ENCODE measurements at regions of chr17 and their contacts with region 1.

Region 1: DNA sequence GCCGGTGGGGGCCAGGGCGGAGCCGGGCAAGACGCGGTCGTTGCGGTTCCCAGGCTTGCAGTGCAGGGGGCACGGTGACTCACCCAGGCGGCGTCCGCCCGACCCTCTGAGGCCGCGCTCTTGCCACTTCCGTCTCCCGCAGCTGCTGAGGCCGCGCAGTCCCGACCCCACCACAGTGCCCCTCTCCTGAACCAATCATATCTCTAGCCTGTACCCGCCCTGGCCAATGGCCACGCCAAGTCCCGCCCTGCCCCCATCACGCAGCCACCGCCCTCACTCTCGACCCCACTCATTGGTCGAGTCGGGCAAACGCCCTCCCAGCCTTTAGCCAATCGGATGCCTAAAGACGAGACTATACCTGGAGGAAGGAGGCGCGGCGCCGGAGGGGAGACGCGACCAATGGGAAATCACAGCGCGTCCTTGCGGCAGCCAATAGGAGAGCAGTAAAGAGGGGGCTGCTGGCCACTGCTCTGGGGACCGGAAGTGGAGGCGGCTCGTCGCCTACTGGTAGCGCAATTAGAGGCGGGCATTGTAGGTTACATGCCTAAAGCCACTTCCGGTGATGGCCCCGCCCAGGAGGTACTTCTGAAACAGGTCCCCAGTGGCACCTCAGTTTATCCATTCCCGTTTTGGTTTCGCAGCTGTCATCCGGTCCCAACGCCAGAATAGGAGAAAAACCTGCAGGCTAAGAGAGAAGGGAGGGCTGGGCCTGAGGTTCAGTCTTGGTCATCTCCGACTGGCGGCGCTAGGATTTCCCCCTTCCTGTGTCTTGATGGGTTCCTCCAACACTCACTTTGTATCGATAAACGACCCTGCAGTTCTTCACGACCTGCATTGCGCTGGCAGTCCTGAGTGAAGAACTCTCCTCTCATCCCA is 3.5 kb upstream of the MTMR4 start:
- DNase-seq: peak; percentile 100
- H3K4me3 ChIP-seq: peak overlapping the region; percentile 74 to 86
- H3K27ac ChIP-seq: peak overlapping the region; percentile 93 to 98
- H3K4me1 ChIP-seq: peaks cover 7 to 17% of the 10 kb centered on the region in 2 donors
- H3K27me3 ChIP-seq: no peaks in the 10 kb centered on the region
- CTCF ChIP-seq: no peak

Region 2: GRCh38 chr17:58006924-58007780 is 510.8 kb before region 1 on chr17 and contains the start of gene SRSF1:
- intact Hi-C with region 1: loop called (anchors 2 kb)
- DNase-seq: peak; percentile 81 to 98
- H3K4me3 ChIP-seq: peak within 1 kb of the TSS; percentile 84 to 85
- H3K27ac ChIP-seq: peak within 1 kb of the TSS; percentile 96 to 99
- H3K4me1 ChIP-seq: peaks cover 4 to 33% of the 10 kb centered on the region in 2 donors
- H3K27me3 ChIP-seq: no peaks in the 10 kb centered on the region
- CTCF ChIP-seq: no peak
- total RNA-seq, gene SRSF1: 89.4 TPM

Region 3: GRCh38 chr17:58352014-58352842 is 165.7 kb before region 1 on chr17 and contains the start of gene SUPT4H1:
- intact Hi-C with region 1: loop called (anchors 2 kb)
- DNase-seq: peak; percentile 64 to 91
- H3K4me3 ChIP-seq: peak within 1 kb of the TSS; percentile 74 to 81
- H3K27ac ChIP-seq: peak within 1 kb of the TSS; percentile 84 to 93
- H3K4me1 ChIP-seq: peaks cover 2 to 3% of the 10 kb centered on the region in 2 donors
- H3K27me3 ChIP-seq: no peaks in the 10 kb centered on the region
- CTCF ChIP-seq: no peak
- total RNA-seq, gene SUPT4H1: 18.0 TPM

Region 4: GRCh38 chr17:58494825-58495535 is 23.0 kb before region 1 on chr17:
- intact Hi-C with region 1: no loop called
- DNase-seq: no peak
- H3K4me3 ChIP-seq: no peak overlapping the region
- H3K27ac ChIP-seq: no peak overlapping the region
- H3K4me1 ChIP-seq: no peaks in the 10 kb centered on the region
- H3K27me3 ChIP-seq: no peaks in the 10 kb centered on the region
- CTCF ChIP-seq: no peak

Region 5: DNA sequence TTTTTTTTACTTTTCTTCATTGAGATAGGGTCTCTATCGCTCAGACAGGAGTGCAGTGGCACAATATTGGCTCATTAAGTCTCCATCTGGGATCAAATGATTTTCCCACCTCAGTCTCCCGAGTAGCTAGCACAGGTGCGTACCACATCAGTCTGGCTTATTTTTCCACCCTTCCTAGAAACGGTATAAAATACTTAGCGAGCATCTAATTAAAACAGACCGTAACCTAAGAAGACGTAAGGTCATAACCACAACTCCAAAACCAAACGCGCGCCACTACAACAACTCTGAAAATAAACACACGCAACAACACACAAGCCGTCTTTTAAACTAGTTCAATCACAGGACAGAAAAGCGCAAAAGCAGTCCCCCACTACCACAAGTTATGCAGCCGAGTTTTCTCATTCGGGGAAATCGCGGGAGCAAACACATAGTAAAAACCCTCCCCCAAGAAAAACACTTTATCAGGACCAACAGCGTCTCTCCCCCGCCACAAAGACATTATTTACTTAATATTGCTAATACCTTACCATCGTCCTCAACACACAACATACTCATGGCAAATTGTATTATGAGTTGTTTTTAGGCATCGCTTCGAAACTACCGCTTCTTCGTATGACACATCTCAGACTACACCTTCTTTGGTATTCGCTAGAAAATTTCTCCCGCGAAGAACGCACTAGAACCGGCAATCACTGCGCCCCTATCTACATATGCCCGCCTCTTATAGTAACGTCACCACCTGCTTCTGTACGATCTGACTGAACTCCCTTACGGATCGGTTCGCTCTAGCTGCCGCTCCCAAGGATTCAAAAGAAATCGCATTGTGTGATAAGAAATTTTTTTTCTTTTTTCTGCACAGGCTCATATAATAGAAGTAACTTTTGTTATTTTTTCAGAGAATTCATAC is 141.1 kb after region 1 on chr17:
- intact Hi-C with region 1: loop called (anchors 2 kb)
- DNase-seq: peak in 1 of 2 donors; percentile 81
- H3K4me3 ChIP-seq: peak overlapping the region; percentile 41 to 52
- H3K27ac ChIP-seq: peak overlapping the region; percentile 36 to 64
- H3K4me1 ChIP-seq: no peaks in the 10 kb centered on the region
- H3K27me3 ChIP-seq: no peaks in the 10 kb centered on the region
- CTCF ChIP-seq: no peak

Region 6: DNA sequence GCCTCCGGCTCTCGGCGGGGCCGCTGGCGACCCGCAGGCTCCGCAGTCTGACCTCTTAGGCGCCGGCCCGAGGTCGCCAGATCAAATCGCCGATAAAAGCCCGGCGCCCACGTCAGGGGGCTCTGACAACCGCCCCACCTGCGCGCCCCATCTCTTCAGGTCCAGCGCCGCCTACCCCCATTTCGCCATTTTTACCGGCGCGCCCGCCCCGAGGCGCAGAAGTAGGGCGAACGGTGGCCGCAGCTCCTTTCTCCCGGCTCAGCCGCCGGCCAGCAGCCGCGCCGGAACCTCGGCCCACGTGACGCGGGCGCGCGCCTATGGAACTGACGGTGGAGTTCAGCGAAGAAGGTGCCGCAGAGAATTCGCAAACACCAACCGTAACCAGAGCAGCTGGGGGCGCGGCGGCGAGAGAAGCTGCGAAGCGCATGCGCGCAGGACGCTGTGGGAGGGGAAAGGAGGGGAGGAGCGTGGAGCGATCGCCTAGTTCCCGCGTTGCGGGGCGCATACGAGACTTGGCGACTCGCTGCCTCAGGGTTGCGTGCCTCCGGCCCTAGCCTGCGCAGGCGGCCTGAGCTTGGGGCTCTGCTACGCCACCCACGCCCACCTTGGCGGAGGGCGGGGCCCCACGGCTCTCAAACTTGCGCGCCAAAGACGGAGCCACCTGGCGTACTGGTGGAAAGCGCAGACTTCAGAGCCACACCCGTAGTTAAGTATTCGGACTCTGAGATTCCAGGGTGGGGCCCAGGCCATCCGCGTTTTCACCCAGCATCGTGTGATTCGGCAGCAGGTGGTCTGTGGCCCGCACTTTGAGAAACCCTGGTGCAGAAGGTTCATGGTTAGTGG is 588.7 kb after region 1 on chr17 and contains the start of gene TRIM37:
- intact Hi-C with region 1: loop called (anchors 1 kb)
- DNase-seq: peak; percentile 84 to 98
- H3K4me3 ChIP-seq: peak within 1 kb of the TSS; percentile 78 to 95
- H3K27ac ChIP-seq: peak within 1 kb of the TSS; percentile 87 to 89
- H3K4me1 ChIP-seq: peaks cover 4 to 13% of the 10 kb centered on the region in 2 donors
- H3K27me3 ChIP-seq: no peaks in the 10 kb centered on the region
- CTCF ChIP-seq: peak in 1 of 3 experiments; percentile 6
- total RNA-seq, gene TRIM37: 15.0 TPM

Region 7: GRCh38 chr17:60392042-60392844 is 1874.3 kb after region 1 on chr17 and contains the start of gene USP32:
- intact Hi-C with region 1: loop called (anchors 5 kb)
- DNase-seq: peak; percentile 94 to 99
- H3K4me3 ChIP-seq: peak within 1 kb of the TSS; percentile 90 to 91
- H3K27ac ChIP-seq: peak within 1 kb of the TSS; percentile 88 to 93
- H3K4me1 ChIP-seq: peaks cover 0 to 17% of the 10 kb centered on the region in 2 donors
- H3K27me3 ChIP-seq: no peaks in the 10 kb centered on the region
- CTCF ChIP-seq: peak in 2 of 3 experiments; percentile 22 to 25
- total RNA-seq, gene USP32: 11.9 TPM

Measured in ascending aorta (tissue), 2 donors.